Psoas muscle (tissue), 8 donors: ENCODE measurements at regions of chr5 and their contacts with region 1.

Region 1: GRCh38 chr5:65925601-65926275 is 637 bp upstream of the ERBIN start:
- DNase-seq: peak; percentile 87 to 90
- ATAC-seq: peak; percentile 87 to 91 (median 88)
- H3K4me3 ChIP-seq: peak overlapping the region; percentile 95
- H3K27ac ChIP-seq: peak overlapping the region; percentile 100
- H3K4me1 ChIP-seq: peaks cover 21% of the 10 kb centered on the region
- H3K27me3 ChIP-seq: no peaks in the 10 kb centered on the region
- CTCF ChIP-seq: peak; percentile 28

Region 2: GRCh38 chr5:65774346-65774745 is 151.4 kb before region 1 on chr5:
- intact Hi-C with region 1: loop called in 1 of 2 experiments (anchors 10 kb)
- DNase-seq: no peak
- ATAC-seq: peak; percentile 84 to 87 (median 85)
- H3K4me3 ChIP-seq: no peak overlapping the region
- H3K27ac ChIP-seq: no peak overlapping the region
- H3K4me1 ChIP-seq: peaks cover 42% of the 10 kb centered on the region
- H3K27me3 ChIP-seq: no peaks in the 10 kb centered on the region
- CTCF ChIP-seq: no peak

Region 3: DNA sequence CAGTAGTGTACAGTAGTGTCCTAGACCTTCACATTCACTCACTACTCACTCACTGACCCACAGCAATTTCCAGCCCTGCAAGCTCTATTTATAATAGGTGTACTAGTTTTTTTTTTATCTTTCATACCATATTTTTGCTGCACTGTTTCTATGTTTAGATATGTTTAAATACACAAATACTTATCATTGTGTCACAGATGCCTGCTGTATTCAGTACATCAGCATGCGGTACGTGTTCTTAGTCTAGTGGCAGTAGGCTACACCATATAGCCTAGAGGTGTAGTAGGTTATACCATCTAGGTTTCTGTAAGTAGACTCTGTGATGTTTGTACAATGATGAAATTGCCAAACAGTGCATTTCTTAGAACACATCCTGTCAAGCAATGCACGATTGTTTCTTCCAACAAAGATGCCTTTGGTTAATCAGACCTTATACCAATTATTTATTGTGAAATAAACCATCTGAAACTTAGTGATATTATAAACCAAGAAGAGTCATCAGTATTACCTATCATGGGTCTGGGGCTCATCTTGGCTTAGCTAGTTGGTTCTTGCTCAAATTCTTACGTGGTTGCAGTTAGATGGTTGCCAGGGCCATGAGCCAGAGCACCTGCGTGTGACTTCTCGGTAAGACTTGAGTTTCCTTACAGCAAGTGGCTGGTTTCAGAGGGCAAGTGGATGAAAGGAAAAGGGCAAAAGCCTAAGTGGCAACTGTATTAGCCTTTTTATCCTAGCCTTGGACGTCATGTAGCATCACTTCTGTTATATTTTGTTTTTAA is 41.7 kb after region 1 on chr5:
- intact Hi-C with region 1: loop called in 1 of 2 experiments (anchors 5 kb)
- DNase-seq: peak in 1 of 2 donors; percentile 64
- ATAC-seq: peak; percentile 58 to 68 (median 64)
- H3K4me3 ChIP-seq: peak overlapping the region; percentile 35
- H3K27ac ChIP-seq: peak overlapping the region; percentile 78
- H3K4me1 ChIP-seq: peaks cover 84% of the 10 kb centered on the region
- H3K27me3 ChIP-seq: no peaks in the 10 kb centered on the region
- CTCF ChIP-seq: no peak

Region 4: GRCh38 chr5:66010476-66010875 is 84.7 kb after region 1 on chr5:
- intact Hi-C with region 1: loop called in 1 of 2 experiments (anchors 5 kb)
- DNase-seq: no peak
- ATAC-seq: no peak
- H3K4me3 ChIP-seq: no peak overlapping the region
- H3K27ac ChIP-seq: no peak overlapping the region
- H3K4me1 ChIP-seq: no peaks in the 10 kb centered on the region
- H3K27me3 ChIP-seq: no peaks in the 10 kb centered on the region
- CTCF ChIP-seq: no peak

Region 5: GRCh38 chr5:66021585-66021984 is 95.8 kb after region 1 on chr5:
- intact Hi-C with region 1: loop called in 1 of 2 experiments (anchors 10 kb)
- DNase-seq: no peak
- ATAC-seq: peak in 3 of 4 donors; percentile 25 to 74 (median 40)
- H3K4me3 ChIP-seq: no peak overlapping the region
- H3K27ac ChIP-seq: no peak overlapping the region
- H3K4me1 ChIP-seq: no peaks in the 10 kb centered on the region
- H3K27me3 ChIP-seq: no peaks in the 10 kb centered on the region
- CTCF ChIP-seq: no peak

Region 6: DNA sequence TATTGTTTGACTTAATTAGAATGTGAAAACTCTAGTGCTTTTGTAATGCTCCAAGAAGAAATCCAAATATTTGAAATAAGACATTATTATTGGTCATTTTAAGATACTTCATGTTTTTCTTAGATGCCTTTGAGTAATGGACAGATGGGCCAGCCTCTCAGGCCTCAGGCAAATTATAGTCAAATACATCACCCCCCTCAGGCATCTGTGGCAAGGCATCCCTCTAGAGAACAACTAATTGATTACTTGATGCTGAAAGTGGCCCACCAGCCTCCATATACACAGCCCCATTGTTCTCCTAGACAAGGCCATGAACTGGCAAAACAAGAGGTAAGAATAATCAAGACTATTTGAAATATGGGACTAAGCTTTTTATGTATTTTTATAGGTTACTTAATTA is 149.2 kb after region 1 on chr5:
- intact Hi-C with region 1: loop called in 1 of 2 experiments (anchors 5 kb)
- DNase-seq: no peak
- ATAC-seq: no peak
- H3K4me3 ChIP-seq: no peak overlapping the region
- H3K27ac ChIP-seq: no peak overlapping the region
- H3K4me1 ChIP-seq: no peaks in the 10 kb centered on the region
- H3K27me3 ChIP-seq: no peaks in the 10 kb centered on the region
- CTCF ChIP-seq: no peak

Region 7: GRCh38 chr5:66144074-66144833 is 218.5 kb after region 1 on chr5 and contains the start of gene SREK1:
- intact Hi-C with region 1: loop called (anchors 2 to 5 kb)
- DNase-seq: peak; percentile 92 to 96
- ATAC-seq: peak; percentile 91 to 94 (median 94)
- H3K4me3 ChIP-seq: peak within 1 kb of the TSS; percentile 91
- H3K27ac ChIP-seq: peak within 1 kb of the TSS; percentile 99
- H3K4me1 ChIP-seq: peaks cover 36% of the 10 kb centered on the region
- H3K27me3 ChIP-seq: no peaks in the 10 kb centered on the region
- CTCF ChIP-seq: no peak
- total RNA-seq, gene SREK1: 25.1 to 29.8 (median 27.9) TPM

Region 8: DNA sequence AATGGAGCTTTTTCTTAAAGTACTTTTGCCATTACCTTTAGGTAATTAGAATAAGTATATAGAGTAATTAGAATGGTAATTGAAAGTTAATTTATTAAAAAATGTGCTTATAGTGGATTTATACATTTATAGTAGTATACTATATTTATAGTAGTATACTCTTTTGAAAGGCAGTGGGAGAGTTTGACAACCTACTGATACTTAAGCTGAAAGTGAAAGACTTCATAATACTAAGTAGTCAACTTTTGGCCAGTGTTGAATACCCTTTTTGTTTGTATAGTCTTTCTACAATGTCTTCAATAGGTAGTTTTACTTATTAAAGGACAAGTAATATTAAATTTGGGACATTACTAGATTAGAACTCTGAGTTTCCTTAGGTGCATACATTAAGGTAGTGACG is 231.3 kb after region 1 on chr5:
- intact Hi-C with region 1: no loop called
- DNase-seq: no peak
- ATAC-seq: no peak
- H3K4me3 ChIP-seq: no peak overlapping the region
- H3K27ac ChIP-seq: no peak overlapping the region
- H3K4me1 ChIP-seq: peaks cover 12% of the 10 kb centered on the region
- H3K27me3 ChIP-seq: no peaks in the 10 kb centered on the region
- CTCF ChIP-seq: no peak